ENCODE measurements at regions of chr4 and their contacts with region 1.

Region 1: GRCh38 chr4:42519803-42520417 is 122.6 kb downstream of the SHISA3 start:
- DNase-seq: peak; percentile 21
- H3K4me3 Mint-ChIP-seq: no peak overlapping the region
- H3K27ac Mint-ChIP-seq: no peak overlapping the region
- H3K4me1 Mint-ChIP-seq: no peaks in the 10 kb centered on the region
- H3K27me3 Mint-ChIP-seq: no peaks in the 10 kb centered on the region

Region 2: GRCh38 chr4:42172128-42172790 is 347.7 kb before region 1 on chr4:
- intact Hi-C with region 1: no loop called
- DNase-seq: no peak
- H3K4me3 Mint-ChIP-seq: no peak overlapping the region
- H3K27ac Mint-ChIP-seq: no peak overlapping the region
- H3K4me1 Mint-ChIP-seq: no peaks in the 10 kb centered on the region
- H3K27me3 Mint-ChIP-seq: peaks cover 3% of the 10 kb centered on the region

Region 3: GRCh38 chr4:42371306-42372252 is 148.3 kb before region 1 on chr4:
- intact Hi-C with region 1: loop called (anchors 1 kb)
- DNase-seq: no peak
- H3K4me3 Mint-ChIP-seq: no peak overlapping the region
- H3K27ac Mint-ChIP-seq: no peak overlapping the region
- H3K4me1 Mint-ChIP-seq: no peaks in the 10 kb centered on the region
- H3K27me3 Mint-ChIP-seq: peaks cover 5% of the 10 kb centered on the region

Region 4: GRCh38 chr4:42927946-42928345 is 408.0 kb after region 1 on chr4:
- intact Hi-C with region 1: no loop called
- DNase-seq: no peak
- H3K4me3 Mint-ChIP-seq: no peak overlapping the region
- H3K27ac Mint-ChIP-seq: no peak overlapping the region
- H3K4me1 Mint-ChIP-seq: no peaks in the 10 kb centered on the region
- H3K27me3 Mint-ChIP-seq: peaks cover 2% of the 10 kb centered on the region

Measured in activated T-helper 1 cell treated with anti-CD3 and anti-CD28 coated beads, Interleukin-12 subunit alpha, Interleukin-12 subunit beta, Interleukin-2, Interleukin-4 antibody, amounts not matched to agents 30 ng/mL and 10 ng/mL and 1 ng/mL, durations not matched to agents 14 hours and 24 hours and 36 hours (primary cell).